WTC11 (cell line): ENCODE measurements at regions of chr7 and their contacts with region 1.

Region 1: GRCh38 chr7:92042056-92042737 is 92.1 kb downstream of the CYP51A1 start:
- DNase-seq: no peak
- ATAC-seq: no peak
- H3K4me3 Mint-ChIP-seq: no peak overlapping the region
- H3K27ac Mint-ChIP-seq: no peak overlapping the region
- H3K4me1 Mint-ChIP-seq: no peaks in the 10 kb centered on the region
- H3K27me3 Mint-ChIP-seq: no peaks in the 10 kb centered on the region
- CTCF ChIP-seq: no peak

Region 2: GRCh38 chr7:92415225-92415624 is 373.0 kb after region 1 on chr7:
- CTCF ChIA-PET with region 1: no interaction called
- POLR2A ChIA-PET with region 1: interaction called, 10 read pairs
- DNase-seq: no peak
- ATAC-seq: no peak
- H3K4me3 Mint-ChIP-seq: no peak overlapping the region
- H3K27ac Mint-ChIP-seq: no peak overlapping the region
- H3K4me1 Mint-ChIP-seq: no peaks in the 10 kb centered on the region
- H3K27me3 Mint-ChIP-seq: no peaks in the 10 kb centered on the region
- CTCF ChIP-seq: no peak